Sigmoid colon (tissue), 7 donors: ENCODE measurements at regions of chr12 and their contacts with region 1.

Region 1: GRCh38 chr12:93441617-93442410 is at the start of gene UBE2N:
- DNase-seq: peak; percentile 97
- H3K4me3 ChIP-seq: peak within 1 kb of the TSS; percentile 90 to 100 (median 97)
- H3K27ac ChIP-seq: peak within 1 kb of the TSS; percentile 85 to 97 (median 96)
- H3K4me1 ChIP-seq: peaks cover 0 to 45% (median 35%) of the 10 kb centered on the region in 4 donors
- H3K27me3 ChIP-seq: no peaks in the 10 kb centered on the region
- CTCF ChIP-seq: no peak
- EP300 ChIP-seq: no peak
- POLR2A ChIP-seq: peak; percentile 15 to 26
- total RNA-seq, gene UBE2N: 23.0 to 28.0 (median 23.9) TPM

Region 2: GRCh38 chr12:93156094-93156716 is 285.6 kb before region 1 on chr12:
- intact Hi-C with region 1: no loop called
- DNase-seq: no peak
- H3K4me3 ChIP-seq: no peak overlapping the region
- H3K27ac ChIP-seq: peak overlapping the region in 2 of 4 donors; percentile 12 to 69
- H3K4me1 ChIP-seq: peaks cover 0 to 14% (median 13%) of the 10 kb centered on the region in 4 donors
- H3K27me3 ChIP-seq: no peaks in the 10 kb centered on the region
- CTCF ChIP-seq: no peak
- EP300 ChIP-seq: no peak
- POLR2A ChIP-seq: no peak

Region 3: GRCh38 chr12:93467351-93468007 is 25.7 kb after region 1 on chr12 and contains the start of gene MRPL42:
- intact Hi-C with region 1: loop called (anchors 1 kb)
- DNase-seq: peak; percentile 93
- H3K4me3 ChIP-seq: peak within 1 kb of the TSS; percentile 55 to 74 (median 66)
- H3K27ac ChIP-seq: peak within 1 kb of the TSS; percentile 81 to 90 (median 87)
- H3K4me1 ChIP-seq: peaks cover 0 to 24% (median 17%) of the 10 kb centered on the region in 4 donors
- H3K27me3 ChIP-seq: no peaks in the 10 kb centered on the region
- CTCF ChIP-seq: peak; percentile 51 to 75 (median 65)
- EP300 ChIP-seq: no peak
- POLR2A ChIP-seq: peak; percentile 34 to 60
- total RNA-seq, gene MRPL42: 37.9 to 51.9 (median 44.2) TPM